ENCODE measurements at regions of chr19 and their contacts with region 1.

Region 1: DNA sequence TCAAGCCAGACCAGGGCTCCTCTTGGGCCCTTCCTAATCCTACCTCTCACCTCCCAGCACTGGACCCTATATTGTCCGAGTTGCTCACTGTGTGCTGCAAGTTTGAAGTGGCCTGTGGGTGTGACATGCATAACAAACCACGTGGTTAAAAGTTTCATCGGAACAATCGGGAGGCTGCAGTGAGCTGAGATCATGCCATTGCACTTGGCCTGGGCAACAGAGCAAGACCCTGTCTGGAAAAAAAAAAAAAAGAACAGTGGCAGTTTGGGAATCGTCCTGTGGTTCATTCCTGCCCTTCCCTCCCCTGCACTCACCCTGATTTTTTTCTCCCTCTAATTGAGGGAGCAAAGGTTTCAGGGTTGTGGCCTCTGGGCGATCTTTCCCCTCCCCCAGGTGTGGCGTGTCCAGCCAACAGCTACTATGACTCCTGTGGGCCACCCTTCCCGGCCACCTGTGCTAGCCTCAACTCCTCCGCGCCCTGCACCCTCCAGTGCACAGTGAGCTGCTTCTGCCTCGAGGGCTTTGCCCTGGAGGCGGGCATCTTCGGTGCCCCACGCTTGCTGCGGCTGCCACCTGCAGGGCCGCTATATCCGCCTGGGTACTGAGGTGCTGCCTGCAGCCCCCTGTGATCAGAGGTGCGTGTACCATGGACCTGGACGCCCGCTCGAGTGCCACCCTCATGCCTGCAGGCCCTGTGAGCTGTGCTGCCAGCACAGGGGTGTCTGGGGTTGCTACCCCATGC is 16.3 kb upstream of the FXYD3 start:
- DNase-seq: no peak
- CTCF ChIP-seq: no peak

Region 2: DNA sequence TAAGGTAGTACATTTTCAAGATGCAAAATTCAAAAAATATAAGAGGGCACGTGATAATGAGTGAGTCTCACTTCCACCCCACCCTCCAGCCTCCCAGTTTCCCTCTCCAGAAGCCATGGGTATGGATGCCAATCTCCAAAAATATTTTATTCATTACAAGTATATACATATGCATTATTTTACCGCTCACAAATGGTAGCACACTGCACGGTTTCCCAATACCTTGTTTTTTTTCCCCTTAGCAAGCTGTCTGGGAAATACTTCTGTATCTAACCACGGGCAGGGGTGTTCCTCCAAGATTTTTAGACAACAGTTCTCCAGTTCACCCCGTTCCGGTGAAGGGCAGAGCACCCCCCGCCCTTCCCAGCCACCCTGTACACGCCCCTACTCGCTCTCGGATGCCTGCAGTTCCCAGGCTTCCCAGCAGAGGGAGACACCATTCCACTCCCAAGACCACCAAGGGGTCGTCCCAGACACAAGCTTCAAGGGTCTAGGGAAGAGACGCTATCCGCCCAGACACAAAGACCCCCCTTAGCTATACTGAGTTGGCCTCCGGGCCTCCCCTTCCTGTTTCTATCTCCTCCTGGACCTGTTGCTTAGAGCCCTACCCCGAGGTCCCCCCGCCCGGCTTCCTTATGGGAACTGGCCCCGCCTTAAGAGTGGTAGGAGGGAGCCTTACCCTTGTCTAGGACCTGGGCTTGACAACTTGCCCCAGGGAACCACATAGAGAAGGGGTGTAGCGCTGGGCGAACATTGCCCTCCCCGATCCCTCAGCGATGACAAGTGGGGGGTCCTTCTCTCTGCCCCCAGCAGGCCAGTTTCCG is 15.2 kb after region 1 on chr19:
- CTCF ChIA-PET with region 1: interaction called, 15 read pairs
- POLR2A ChIA-PET with region 1: no interaction called
- DNase-seq: peak; percentile 87
- CTCF ChIP-seq: peak; percentile 87